ENCODE measurements at regions of chr15 and their contacts with region 1.

Region 1: GRCh38 chr15:40694688-40695468 is at the start of gene RAD51:
- DNase-seq: peak; percentile 86 to 94 (median 90)
- H3K4me3 ChIP-seq: peak within 1 kb of the TSS; percentile 96
- H3K4me3 Mint-ChIP-seq: peak within 1 kb of the TSS; percentile 92 to 99 (median 96)
- H3K27ac ChIP-seq: peak within 1 kb of the TSS; percentile 98
- H3K27ac Mint-ChIP-seq: peak within 1 kb of the TSS; percentile 91 to 99 (median 98)
- H3K4me1 ChIP-seq: peaks cover 8% of the 10 kb centered on the region
- H3K4me1 Mint-ChIP-seq: peaks cover 19 to 28% (median 20%) of the 10 kb centered on the region in 3 donors
- H3K27me3 ChIP-seq: no peaks in the 10 kb centered on the region
- H3K27me3 Mint-ChIP-seq: no peaks in the 10 kb centered on the region
- total RNA-seq, gene RAD51: 54.3 to 57.6 TPM

Region 2: DNA sequence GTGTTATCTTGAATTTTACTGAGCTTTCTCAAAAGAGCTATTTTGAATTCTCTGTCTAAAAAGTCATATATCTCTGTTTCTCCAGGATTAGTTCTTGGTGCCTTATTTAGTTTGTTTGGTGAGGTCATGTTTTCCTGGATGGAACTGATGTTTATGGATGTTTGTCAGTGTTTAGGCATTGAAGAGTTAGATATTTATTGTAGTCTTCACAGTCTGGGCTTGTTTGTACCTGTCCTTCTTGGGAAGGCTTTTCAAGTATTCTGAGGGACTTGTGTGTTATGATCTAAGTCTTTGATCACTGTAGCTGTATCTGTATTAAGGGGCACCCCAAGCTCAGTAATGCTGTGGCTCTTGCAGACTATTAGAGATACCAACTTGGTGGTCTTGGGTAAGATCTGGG is 10.5 kb before region 1 on chr15:
- CTCF ChIA-PET with region 1: interaction called, 10 read pairs
- POLR2A ChIA-PET with region 1: interaction called, 3 read pairs
- DNase-seq: no peak
- H3K4me3 ChIP-seq: no peak overlapping the region
- H3K4me3 Mint-ChIP-seq: no peak overlapping the region
- H3K27ac ChIP-seq: no peak overlapping the region
- H3K27ac Mint-ChIP-seq: peak overlapping the region in 1 of 8 donors; percentile 68
- H3K4me1 ChIP-seq: no peaks in the 10 kb centered on the region
- H3K4me1 Mint-ChIP-seq: peaks cover 0 to under 1% (median 0%) of the 10 kb centered on the region in 3 donors
- H3K27me3 ChIP-seq: no peaks in the 10 kb centered on the region
- H3K27me3 Mint-ChIP-seq: no peaks in the 10 kb centered on the region

Region 3: DNA sequence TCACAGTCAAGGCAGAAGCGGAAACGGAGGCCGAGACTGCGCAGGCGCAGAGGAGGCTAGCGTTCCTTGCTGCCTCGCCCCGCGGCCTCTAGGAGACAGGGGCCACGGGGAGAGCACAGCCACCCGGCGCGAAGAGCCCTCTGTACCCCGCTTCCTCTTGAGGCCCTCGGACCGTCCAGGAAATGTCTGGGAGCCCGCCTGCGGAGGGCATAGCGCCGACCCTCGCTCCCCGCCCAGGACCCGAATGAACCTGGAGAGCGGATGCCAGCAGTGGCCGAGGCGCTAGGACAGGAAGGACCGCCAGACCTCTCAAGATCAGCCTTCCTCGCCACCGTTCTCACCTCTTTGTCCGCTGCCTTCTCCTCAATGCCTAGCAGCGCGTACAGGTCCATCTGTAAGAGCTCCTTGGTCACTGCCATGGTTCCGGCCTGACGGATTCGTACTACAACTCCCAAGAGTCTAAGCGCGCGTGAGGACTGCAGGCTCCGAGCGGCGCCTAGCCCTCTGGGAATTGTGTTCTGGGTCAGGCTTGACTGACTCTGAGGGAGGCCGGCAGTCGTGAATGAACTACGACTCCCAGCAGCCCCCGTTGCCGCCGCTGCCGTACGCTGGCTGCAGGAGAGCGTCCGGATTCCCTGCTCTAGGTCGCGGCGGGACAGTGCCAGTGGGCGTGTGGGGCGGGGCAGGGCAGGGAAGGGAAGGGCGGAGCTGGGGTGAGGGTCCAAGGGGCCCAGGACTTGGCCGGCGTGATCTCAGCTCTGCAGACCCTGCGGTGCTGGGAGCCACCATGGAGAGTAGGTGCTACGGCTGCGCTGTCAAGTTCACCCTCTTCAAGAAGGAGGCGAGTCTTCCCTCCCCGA is 112.4 kb after region 1 on chr15 and contains the starts of genes DNAJC17 and ZFYVE19:
- CTCF ChIA-PET with region 1: no interaction called
- POLR2A ChIA-PET with region 1: interaction called, 11 read pairs
- DNase-seq: peak; percentile 88 to 95 (median 89)
- H3K4me3 ChIP-seq: peak within 1 kb of the TSS; percentile 100
- H3K4me3 Mint-ChIP-seq: peak within 1 kb of the TSS; percentile 94 to 100 (median 99)
- H3K27ac ChIP-seq: peak within 1 kb of the TSS; percentile 93
- H3K27ac Mint-ChIP-seq: peak within 1 kb of the TSS; percentile 88 to 99 (median 97)
- H3K4me1 ChIP-seq: peaks cover 18% of the 10 kb centered on the region
- H3K4me1 Mint-ChIP-seq: peaks cover 28 to 41% (median 29%) of the 10 kb centered on the region in 3 donors
- H3K27me3 ChIP-seq: no peaks in the 10 kb centered on the region
- H3K27me3 Mint-ChIP-seq: no peaks in the 10 kb centered on the region
- total RNA-seq, gene DNAJC17: 46.5 to 47.0 TPM
- total RNA-seq, gene ZFYVE19: 22.5 to 25.5 TPM

Region 4: DNA sequence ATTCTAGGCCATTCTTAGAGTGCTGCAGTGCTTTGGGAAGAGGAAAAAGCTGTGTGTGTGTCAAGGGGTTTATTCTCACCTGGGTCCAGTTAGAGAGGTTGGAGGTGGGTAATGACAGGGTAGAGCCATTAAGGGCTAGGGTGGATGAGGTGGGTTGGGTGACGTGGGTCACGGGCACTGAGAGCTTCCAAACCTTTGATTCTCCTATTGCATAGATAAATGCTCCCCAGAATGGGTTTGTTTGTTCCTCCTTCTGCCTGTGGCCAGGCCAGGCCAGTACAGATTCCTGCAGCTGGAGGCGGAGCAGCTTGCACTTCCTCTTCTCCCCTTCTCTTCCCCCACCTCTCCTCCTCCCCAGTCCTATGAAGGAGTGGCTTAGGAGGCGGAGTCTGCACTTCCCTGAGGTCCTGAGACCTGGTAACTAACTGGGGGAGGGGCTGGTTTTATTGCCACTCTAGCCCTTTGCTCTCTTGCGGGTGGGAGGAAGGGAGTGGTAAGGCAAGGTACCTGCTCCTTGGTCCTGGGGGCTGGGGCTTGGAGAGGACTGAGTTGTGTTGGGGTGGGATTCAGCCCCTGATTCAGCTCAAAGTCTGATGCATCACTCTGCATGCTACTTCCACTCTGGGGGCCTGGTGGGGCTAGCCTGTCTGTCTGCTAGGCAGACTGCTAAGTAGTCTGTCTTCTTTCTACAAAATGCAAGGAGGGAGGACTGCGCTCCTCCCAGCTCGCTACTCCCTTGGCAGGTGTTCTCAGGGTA is 152.5 kb after region 1 on chr15:
- CTCF ChIA-PET with region 1: no interaction called
- POLR2A ChIA-PET with region 1: no interaction called
- DNase-seq: no peak
- H3K4me3 ChIP-seq: no peak overlapping the region
- H3K4me3 Mint-ChIP-seq: peak overlapping the region in 2 of 7 donors; percentile 25 to 71
- H3K27ac ChIP-seq: peak overlapping the region; percentile 59
- H3K27ac Mint-ChIP-seq: peak overlapping the region in 2 of 8 donors; percentile 36 to 91
- H3K4me1 ChIP-seq: peaks cover 17% of the 10 kb centered on the region
- H3K4me1 Mint-ChIP-seq: peaks cover 5 to 26% (median 11%) of the 10 kb centered on the region in 3 donors
- H3K27me3 ChIP-seq: no peaks in the 10 kb centered on the region
- H3K27me3 Mint-ChIP-seq: peaks cover 11% of the 10 kb centered on the region in 2 donors